IMR-90 (cell line): ENCODE measurements at regions of chr1 and their contacts with region 1.

Region 1: DNA sequence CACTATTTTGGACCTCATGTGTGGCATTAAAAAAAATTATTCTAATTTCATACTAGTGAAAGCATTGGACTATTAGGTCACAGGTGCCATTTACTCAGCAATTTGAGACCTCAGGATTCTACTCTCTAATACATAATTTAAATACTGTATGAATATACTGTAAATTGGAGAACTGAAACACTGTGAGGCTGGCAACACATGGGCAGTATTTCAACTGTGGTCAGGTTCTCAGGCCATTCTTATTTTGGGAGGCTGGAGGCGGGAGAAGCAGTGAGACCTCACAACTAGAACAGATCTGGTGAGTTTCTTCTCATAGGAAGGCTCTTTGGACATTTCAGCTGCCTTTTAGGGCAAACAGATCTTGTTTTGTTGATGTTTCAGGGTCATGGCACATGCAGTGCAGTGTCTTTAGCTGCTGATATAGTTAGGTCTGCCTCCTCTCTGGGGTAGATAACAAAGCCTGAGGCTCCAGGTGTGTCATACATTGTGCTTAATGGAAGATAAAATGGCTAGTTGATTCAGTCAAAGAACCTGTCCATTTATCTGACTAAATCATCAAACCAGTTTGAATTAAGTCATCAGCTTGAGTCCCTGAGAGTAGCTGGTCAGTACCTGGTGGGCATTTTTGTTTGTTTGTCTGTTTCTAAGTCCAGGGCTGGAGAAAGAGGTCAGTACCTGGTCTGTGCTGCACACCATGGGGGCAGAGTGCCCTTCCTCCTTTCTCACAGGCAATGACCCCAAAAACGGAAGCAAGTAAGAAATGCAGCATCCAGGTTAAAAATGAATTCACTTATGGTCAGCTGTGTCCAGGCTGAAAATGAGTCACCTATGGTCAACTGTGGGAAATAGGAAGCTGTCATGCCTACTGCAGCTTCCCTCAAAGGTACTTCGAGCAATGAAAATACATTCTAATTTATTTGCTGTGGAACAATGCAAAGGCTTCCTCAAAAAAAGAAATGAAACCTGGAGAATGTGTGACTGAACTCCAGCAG is 216.2 kb downstream of the SDCCAG8 start:
- DNase-seq: peak; percentile 56
- ATAC-seq: no peak
- H3K4me3 ChIP-seq: no peak overlapping the region
- H3K27ac ChIP-seq: no peak overlapping the region
- H3K4me1 ChIP-seq: peaks cover 11% of the 10 kb centered on the region
- H3K27me3 ChIP-seq: no peaks in the 10 kb centered on the region
- CTCF ChIP-seq: no peak
- POLR2A ChIP-seq: no peak
- RAD21 ChIP-seq: no peak

Region 2: GRCh38 chr1:243447347-243447746 is 24.7 kb before region 1 on chr1:
- CTCF ChIA-PET with region 1: no interaction called
- POLR2A ChIA-PET with region 1: no interaction called
- dilution Hi-C with region 1: no loop called
- in situ Hi-C with region 1: no loop called
- intact Hi-C with region 1: no loop called
- DNase-seq: peak; percentile 62
- ATAC-seq: 0 out of 2 replicates have a peak, but pooled peaks have one; percentile 42
- H3K4me3 ChIP-seq: no peak overlapping the region
- H3K27ac ChIP-seq: no peak overlapping the region
- H3K4me1 ChIP-seq: no peaks in the 10 kb centered on the region
- H3K27me3 ChIP-seq: no peaks in the 10 kb centered on the region
- CTCF ChIP-seq: no peak
- POLR2A ChIP-seq: no peak
- RAD21 ChIP-seq: no peak

Region 3: GRCh38 chr1:243748706-243749283 is 276.7 kb after region 1 on chr1:
- CTCF ChIA-PET with region 1: no interaction called
- POLR2A ChIA-PET with region 1: no interaction called
- dilution Hi-C with region 1: no loop called
- in situ Hi-C with region 1: no loop called
- intact Hi-C with region 1: loop called (anchors 5 kb)
- DNase-seq: peak; percentile 88
- ATAC-seq: peak; percentile 98
- H3K4me3 ChIP-seq: no peak overlapping the region
- H3K27ac ChIP-seq: no peak overlapping the region
- H3K4me1 ChIP-seq: peaks cover 7% of the 10 kb centered on the region
- H3K27me3 ChIP-seq: no peaks in the 10 kb centered on the region
- CTCF ChIP-seq: peak; percentile 78
- POLR2A ChIP-seq: no peak
- RAD21 ChIP-seq: peak; percentile 84